ENCODE measurements at regions of chr12 and their contacts with region 1.

Region 1: DNA sequence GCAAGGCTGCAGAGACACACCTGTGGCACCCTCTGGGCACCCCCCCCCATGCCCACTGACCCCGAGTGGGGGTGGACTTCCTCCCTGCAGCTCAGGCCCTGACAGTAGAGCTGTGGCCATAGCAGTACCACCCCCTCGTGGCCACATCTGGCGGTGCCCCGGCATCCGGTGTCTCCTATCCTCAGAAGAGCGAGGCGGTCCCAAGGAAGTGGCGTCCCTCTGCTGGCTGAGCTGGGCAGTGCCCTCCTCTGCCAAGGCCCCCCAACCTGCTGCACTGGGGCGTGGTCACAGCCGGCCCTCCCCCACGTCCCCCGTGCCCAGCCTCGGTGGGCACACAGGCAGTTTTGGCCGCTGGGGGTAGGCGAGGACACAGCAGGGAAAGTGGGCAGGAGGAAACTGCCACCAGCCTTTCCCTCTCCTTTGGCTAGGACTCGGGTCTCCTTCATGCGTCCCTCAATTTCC is 6.0 kb upstream of the SLC6A12 start:
- DNase-seq: peak; percentile 97
- ATAC-seq: peak; percentile 99
- H3K4me3 Mint-ChIP-seq: peak overlapping the region; percentile 25; the same call in 1 of the 2 replicates
- H3K27ac Mint-ChIP-seq: no peak overlapping the region
- H3K4me1 Mint-ChIP-seq: peaks cover 9% of the 10 kb centered on the region
- H3K27me3 Mint-ChIP-seq: peaks cover 5% of the 10 kb centered on the region; the same call in 1 of the 2 replicates
- CTCF ChIP-seq: peak; percentile 86

Region 2: GRCh38 chr12:106118-106591 is 113.8 kb before region 1 on chr12:
- CTCF ChIA-PET with region 1: interaction called, 13 read pairs
- POLR2A ChIA-PET with region 1: no interaction called
- DNase-seq: peak; percentile 46
- ATAC-seq: peak; percentile 57
- H3K4me3 Mint-ChIP-seq: no peak overlapping the region
- H3K27ac Mint-ChIP-seq: peak overlapping the region; percentile 8; the same call in 1 of the 2 replicates
- H3K4me1 Mint-ChIP-seq: peaks cover 58% of the 10 kb centered on the region
- H3K27me3 Mint-ChIP-seq: peaks cover 3% of the 10 kb centered on the region; the same call in 1 of the 2 replicates
- CTCF ChIP-seq: no peak

Region 3: DNA sequence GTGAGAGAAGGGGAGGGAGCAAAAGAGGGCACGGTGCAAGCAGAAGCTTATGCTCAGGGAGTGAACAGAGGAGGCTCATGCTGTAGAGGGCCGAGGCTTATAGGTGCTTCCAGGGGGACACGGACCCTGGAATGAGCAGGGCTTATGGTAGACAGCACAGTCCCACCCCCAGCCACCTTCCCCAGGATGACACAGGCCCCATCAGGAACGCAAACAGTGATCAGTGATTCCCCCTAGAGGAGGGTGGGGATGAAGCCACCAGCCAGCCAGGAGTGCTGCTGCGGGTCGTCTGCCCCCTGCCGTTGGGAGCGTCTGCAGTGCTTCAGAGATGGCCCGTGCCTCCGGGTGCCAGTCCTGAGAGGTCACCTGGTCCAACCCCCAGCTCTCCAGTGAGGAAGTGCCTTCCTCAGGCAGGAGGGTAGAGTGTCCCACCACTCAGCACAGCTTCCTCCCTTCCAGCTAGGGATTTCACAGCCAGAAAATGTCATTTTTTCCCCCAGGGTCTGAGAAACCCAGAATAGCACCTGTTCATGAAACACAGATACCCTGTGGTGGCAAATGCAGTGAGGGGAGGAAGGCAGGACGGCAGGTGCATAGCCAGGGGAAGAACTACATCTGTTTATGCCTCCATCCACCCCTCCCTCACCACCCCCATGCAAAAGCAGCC is 66.7 kb before region 1 on chr12:
- CTCF ChIA-PET with region 1: interaction called, 33 read pairs
- POLR2A ChIA-PET with region 1: no interaction called
- DNase-seq: peak; percentile 87
- ATAC-seq: peak; percentile 95
- H3K4me3 Mint-ChIP-seq: peak overlapping the region; percentile 45
- H3K27ac Mint-ChIP-seq: no peak overlapping the region
- H3K4me1 Mint-ChIP-seq: peaks cover 31% of the 10 kb centered on the region
- H3K27me3 Mint-ChIP-seq: no peaks in the 10 kb centered on the region; the same call in 1 of the 2 replicates
- CTCF ChIP-seq: peak; percentile 69

Region 4: DNA sequence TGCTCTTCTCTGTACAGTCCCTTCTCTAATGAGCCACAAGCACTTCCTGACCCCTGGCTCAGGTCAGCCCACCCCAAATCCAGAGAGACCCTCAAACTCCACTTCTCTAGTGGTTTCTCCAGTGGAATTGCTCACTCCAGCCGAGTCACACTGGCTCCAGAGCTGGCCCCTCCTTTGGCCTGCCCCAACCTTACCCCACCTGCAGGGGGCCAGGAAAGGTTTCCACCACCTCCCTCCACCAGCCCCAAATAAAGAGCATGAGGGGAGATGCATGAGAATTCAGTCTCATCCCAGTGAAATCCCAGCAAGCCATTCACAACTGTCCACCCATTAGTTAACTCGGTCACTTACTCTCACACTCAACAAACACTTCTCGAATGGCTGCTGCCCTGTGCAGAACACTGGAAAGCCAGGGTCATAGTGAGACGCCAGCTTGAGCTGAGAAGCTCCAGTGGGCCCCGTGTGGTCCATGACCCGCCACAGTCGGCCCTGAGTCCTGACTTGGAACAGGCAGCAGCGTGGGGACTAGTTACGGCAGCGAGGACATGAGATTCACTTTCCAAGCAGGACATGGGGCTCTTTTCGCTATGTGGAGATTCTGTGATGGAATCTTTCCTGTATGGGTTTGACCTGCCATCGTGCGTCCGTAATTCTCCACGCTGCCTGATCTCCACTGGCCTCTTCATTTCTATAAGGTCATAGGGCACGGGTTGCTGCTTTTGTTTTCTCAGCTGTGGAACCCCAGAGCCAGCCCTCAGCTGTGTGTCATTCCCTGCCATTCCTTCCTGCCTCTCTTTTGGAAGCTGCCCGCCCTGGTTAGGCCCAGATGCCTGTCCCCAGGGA is 50.2 kb before region 1 on chr12:
- CTCF ChIA-PET with region 1: interaction called, 28 read pairs
- POLR2A ChIA-PET with region 1: no interaction called
- DNase-seq: no peak
- ATAC-seq: peak; percentile 38
- H3K4me3 Mint-ChIP-seq: no peak overlapping the region
- H3K27ac Mint-ChIP-seq: no peak overlapping the region
- H3K4me1 Mint-ChIP-seq: peaks cover 52% of the 10 kb centered on the region
- H3K27me3 Mint-ChIP-seq: peaks cover 8% of the 10 kb centered on the region
- CTCF ChIP-seq: no peak

Region 5: DNA sequence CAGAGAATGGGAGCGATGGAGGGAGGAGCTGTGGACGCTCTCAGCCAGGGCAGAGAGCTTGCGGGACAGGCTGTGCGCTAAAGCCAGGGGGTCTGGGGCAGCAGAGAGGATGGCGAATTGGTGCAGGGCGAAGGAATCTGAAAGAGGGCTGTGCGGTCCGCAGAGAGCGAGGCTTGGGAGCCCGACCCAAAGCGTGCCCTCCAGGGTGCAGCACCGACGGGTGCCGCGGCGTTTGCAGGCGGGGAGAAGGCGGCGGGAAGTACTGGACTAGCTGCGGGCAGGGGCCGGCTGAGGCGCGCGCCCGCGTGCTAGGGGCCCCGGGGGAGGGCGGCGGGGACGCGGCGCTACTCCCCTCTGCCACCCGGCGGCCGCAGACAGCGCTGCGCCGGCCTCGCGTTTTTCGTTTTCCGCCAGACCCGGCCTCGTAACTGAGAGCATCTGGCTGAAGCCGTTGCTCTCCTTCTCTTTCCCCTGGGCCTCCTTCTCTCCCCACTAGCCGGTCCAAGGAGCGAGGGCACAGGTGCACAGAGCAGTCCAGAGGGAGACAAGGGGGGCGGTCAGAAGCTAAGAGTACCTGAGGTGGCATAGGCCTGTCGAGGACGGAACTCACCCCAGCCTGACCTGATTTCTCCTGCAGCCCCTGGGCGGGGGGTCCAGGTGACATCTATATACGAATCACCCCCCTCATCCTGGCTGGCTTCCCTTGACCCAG is 30.9 kb before region 1 on chr12:
- CTCF ChIA-PET with region 1: interaction called, 52 read pairs
- POLR2A ChIA-PET with region 1: interaction called, 4 read pairs
- DNase-seq: peak; percentile 75
- ATAC-seq: peak; percentile 84
- H3K4me3 Mint-ChIP-seq: peak overlapping the region; percentile 85
- H3K27ac Mint-ChIP-seq: no peak overlapping the region
- H3K4me1 Mint-ChIP-seq: no peaks in the 10 kb centered on the region
- H3K27me3 Mint-ChIP-seq: peaks cover 45% of the 10 kb centered on the region
- CTCF ChIP-seq: peak; percentile 54; the same call in 1 of the 2 replicates

Region 6: DNA sequence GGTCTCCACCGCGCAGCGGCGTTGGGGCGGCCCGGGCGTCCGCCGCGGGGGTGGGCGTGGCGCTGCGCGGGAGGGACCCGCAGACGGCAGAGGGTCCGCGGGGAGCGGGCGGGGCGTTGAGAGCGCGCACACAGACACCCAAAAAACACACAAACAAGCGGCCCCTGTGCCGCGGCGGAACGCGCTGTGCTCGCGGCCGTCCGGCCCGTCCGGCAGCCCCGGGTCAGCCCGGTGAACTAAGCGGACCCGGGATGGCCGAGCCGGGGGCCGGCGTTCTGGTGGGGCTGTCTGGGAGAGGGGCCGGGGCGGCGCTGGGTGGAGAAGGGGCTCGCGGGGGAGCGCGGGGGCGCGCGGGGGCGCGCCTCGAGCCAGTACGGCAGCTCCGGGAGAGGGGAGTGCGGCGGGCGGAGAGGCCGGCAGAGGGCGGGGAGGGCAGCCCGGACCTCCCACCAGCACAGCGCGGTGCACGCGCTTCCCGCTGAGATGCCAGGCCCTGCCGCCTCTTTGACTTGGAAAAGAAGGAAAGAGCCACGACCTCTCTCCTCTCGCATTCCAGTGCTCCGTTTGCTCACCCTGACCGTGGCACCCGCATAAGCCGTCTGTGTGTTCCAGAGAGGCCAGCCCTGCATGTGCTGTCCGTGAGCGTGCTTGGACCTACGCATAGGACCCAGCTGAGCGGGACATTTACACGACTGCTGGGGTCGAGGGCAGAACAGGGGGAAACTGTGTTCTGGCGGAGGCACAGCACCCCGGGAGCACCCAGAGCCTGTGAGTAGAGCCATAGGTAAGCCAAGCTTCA is 16.3 kb before region 1 on chr12:
- CTCF ChIA-PET with region 1: interaction called, 43 read pairs
- POLR2A ChIA-PET with region 1: no interaction called
- DNase-seq: peak; percentile 59
- ATAC-seq: peak; percentile 58
- H3K4me3 Mint-ChIP-seq: peak overlapping the region; percentile 68
- H3K27ac Mint-ChIP-seq: no peak overlapping the region
- H3K4me1 Mint-ChIP-seq: peaks cover 24% of the 10 kb centered on the region
- H3K27me3 Mint-ChIP-seq: peaks cover 58% of the 10 kb centered on the region
- CTCF ChIP-seq: no peak

Region 7: GRCh38 chr12:262817-263216 is 42.9 kb after region 1 on chr12 and contains the start of gene SLC6A13:
- CTCF ChIA-PET with region 1: interaction called, 10 read pairs
- POLR2A ChIA-PET with region 1: no interaction called
- DNase-seq: no peak
- ATAC-seq: no peak
- H3K4me3 Mint-ChIP-seq: no peak within 1 kb of the TSS
- H3K27ac Mint-ChIP-seq: no peak within 1 kb of the TSS
- H3K4me1 Mint-ChIP-seq: peaks cover 7% of the 10 kb centered on the region; the same call in 1 of the 2 replicates
- H3K27me3 Mint-ChIP-seq: no peaks in the 10 kb centered on the region; the same call in 1 of the 2 replicates
- CTCF ChIP-seq: no peak
- total RNA-seq, gene SLC6A13: 0.21 to 0.55 TPM (median 0.37 TPM) in 3 replicates

Region 8: GRCh38 chr12:304805-305204 is 84.9 kb after region 1 on chr12:
- CTCF ChIA-PET with region 1: no interaction called
- POLR2A ChIA-PET with region 1: no interaction called
- DNase-seq: no peak
- ATAC-seq: no peak
- H3K4me3 Mint-ChIP-seq: no peak overlapping the region
- H3K27ac Mint-ChIP-seq: no peak overlapping the region
- H3K4me1 Mint-ChIP-seq: no peaks in the 10 kb centered on the region
- H3K27me3 Mint-ChIP-seq: no peaks in the 10 kb centered on the region
- CTCF ChIP-seq: no peak

Region 9: DNA sequence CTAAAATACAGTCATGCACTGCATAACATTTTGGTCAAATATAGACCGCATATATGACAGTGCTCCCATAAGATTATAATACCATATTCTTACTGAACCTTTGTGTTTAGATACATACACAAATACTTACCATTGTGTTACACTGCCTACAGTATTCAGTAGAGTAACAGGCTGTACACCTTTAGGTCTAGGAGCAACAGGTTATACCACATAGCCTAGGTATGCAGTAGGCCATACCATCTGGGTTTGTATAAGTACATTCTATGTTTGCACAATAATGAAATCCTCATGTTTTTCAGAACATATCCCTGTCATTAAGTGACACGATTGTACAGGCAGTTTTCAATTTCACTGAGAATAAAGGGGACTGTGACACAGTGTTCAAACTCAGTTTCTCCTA is 146.9 kb after region 1 on chr12:
- CTCF ChIA-PET with region 1: no interaction called
- POLR2A ChIA-PET with region 1: no interaction called
- DNase-seq: no peak
- ATAC-seq: no peak
- H3K4me3 Mint-ChIP-seq: no peak overlapping the region
- H3K27ac Mint-ChIP-seq: no peak overlapping the region
- H3K4me1 Mint-ChIP-seq: no peaks in the 10 kb centered on the region
- H3K27me3 Mint-ChIP-seq: no peaks in the 10 kb centered on the region
- CTCF ChIP-seq: no peak